Cardiac septum (tissue), 1 donor: ENCODE measurements at regions of chr15 and their contacts with region 1.

Region 1: DNA sequence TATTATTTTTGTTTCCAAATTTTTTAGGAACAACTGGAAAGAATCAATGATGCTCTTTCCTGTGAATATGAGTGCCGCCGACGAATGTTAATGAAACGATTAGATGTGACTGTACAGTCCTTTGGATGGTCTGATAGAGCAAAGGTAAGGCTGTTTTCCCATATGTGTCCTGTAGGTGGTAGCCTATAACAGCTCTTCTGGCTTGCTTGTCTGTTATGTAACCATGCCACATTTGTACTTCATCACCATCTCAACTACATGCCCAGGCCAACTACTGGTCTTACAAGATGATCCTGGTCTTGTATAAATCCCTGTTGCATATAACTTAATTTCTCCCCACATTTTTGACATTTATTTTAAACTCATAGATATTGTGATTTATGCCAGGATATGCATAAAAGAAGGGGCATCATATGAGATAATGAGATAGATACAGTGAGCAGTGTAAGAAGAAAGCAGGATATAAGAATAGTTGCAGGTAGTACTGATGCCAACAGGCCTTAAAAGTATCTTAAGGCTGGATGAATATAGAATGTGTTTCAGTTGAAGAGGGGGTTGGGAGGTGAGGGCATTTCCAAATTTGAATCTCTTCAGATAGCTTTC is 20.3 kb downstream of the FAM98B start:
- DNase-seq: no peak

Region 2: GRCh38 chr15:38683382-38684242 is 209.4 kb after region 1 on chr15:
- intact Hi-C with region 1: loop called (anchors 5 kb)
- DNase-seq: no peak

Region 3: DNA sequence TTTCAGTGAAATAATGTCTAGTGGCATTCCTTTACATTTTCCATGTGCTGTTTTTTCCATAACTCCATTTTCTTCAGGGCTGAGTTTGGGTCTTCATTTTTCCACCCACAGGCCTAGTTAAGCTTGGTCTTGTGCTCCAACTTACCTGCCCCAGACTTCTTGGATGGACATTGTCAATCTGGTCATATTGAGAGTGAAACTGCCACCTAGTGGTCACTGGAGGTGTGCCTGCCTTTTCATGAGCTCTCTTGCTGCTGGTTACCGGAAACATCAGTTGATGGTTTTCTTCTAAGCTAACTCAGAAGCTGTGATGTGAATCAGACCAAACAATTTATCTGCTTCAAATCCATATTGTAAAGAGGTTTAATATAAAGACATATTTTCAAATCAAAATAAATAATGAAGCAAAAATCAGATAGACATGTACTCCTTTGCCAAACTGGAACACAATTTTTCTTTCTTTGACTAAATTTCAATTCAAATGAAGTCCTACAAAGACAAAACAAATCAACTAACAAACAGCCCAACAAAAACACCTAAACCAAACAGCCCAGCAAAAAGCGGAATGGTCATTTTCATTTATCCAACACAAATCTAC is 225.5 kb after region 1 on chr15:
- intact Hi-C with region 1: no loop called
- DNase-seq: no peak